Adrenal gland (tissue), 19 donors: ENCODE measurements at regions of chr9 and their contacts with region 1.

Region 1: GRCh38 chr9:124126571-124127289 is 115.2 kb downstream of the LHX2 start:
- DNase-seq: peak; percentile 63 to 87 (median 74)
- H3K4me3 ChIP-seq: no peak overlapping the region
- H3K27ac ChIP-seq: no peak overlapping the region
- H3K4me1 ChIP-seq: no peaks in the 10 kb centered on the region
- H3K27me3 ChIP-seq: no peaks in the 10 kb centered on the region
- CTCF ChIP-seq: peak; percentile 86 to 99 (median 95)
- POLR2A ChIP-seq: no peak

Region 2: GRCh38 chr9:124320062-124320973 is 193.6 kb after region 1 on chr9:
- intact Hi-C with region 1: loop called (anchors 2 to 5 kb)
- DNase-seq: peak; percentile 67 to 87 (median 76)
- H3K4me3 ChIP-seq: no peak overlapping the region
- H3K27ac ChIP-seq: no peak overlapping the region
- H3K4me1 ChIP-seq: no peaks in the 10 kb centered on the region
- H3K27me3 ChIP-seq: no peaks in the 10 kb centered on the region
- CTCF ChIP-seq: peak; percentile 76 to 89 (median 84)
- POLR2A ChIP-seq: no peak

Region 3: DNA sequence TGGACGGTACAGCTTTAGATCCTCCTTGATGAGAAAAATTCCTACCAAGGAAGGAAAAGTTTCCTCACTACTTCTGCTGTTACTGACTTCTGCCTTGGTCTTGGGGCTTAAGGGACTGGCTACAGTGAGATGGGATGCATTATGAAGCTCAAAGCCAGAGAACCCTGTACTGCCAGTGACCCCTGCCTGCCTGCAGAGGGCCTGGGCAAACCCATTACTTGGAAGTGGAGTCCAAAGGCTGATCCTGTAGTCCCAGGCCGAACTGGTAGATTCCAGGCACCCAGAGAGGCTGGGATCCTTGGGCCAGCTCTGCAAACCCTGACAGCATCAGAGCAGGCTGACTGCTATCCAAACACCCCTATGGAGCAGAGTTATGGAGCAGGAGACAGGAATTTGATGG is 406.2 kb after region 1 on chr9:
- intact Hi-C with region 1: loop called in 1 of 2 experiments (anchors 10 kb)
- DNase-seq: no peak
- H3K4me3 ChIP-seq: no peak overlapping the region
- H3K27ac ChIP-seq: no peak overlapping the region
- H3K4me1 ChIP-seq: peaks cover 2% of the 10 kb centered on the region in 2 donors
- H3K27me3 ChIP-seq: no peaks in the 10 kb centered on the region
- CTCF ChIP-seq: no peak
- POLR2A ChIP-seq: no peak